ENCODE measurements at regions of chr17 and their contacts with region 1.

Region 1: DNA sequence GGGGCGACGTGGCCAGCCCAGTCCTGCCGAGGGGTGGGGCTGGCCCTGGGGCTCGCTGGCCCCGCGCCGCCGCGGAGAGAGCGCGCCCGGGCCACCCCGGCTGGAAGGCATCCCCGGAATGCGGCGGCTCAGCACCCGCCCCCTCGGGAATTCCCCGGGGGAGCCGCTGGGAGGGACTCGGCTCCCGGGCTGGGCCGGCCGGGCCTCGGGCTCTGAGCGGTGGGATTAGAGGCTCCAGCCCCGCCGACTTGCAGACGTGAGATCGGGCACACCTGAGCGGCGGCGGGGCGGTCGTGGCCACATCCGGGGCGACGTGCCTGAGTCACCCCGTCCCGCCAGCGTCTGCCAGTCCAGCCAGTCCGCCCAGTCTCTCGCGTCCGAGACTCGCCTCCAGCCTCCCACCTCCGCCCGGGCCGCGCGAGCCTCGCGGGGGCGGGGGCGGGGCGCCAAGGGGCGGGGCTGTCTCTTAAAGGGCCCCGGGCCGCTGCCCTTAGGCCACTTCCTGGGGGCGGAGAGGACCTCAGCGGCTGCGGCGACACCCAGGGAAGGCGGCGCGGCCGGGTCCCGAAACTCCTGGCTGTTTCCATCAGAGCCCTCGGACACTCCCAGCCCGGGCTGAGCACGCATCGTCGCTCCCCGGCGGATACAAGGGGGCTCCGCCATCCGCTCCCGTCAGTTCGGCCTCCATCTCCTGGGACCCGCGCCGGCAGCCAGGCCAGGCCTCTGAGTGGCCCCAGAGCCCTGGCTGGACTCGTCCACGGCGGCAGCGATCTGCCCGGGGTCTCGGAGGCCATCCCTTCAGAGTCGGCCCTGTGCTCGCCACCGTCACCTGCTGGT is at the start of gene KCTD11:
- DNase-seq: peak; percentile 92 to 99
- H3K4me3 ChIP-seq: peak within 1 kb of the TSS; percentile 86
- H3K27ac ChIP-seq: peak within 1 kb of the TSS; percentile 98
- H3K4me1 ChIP-seq: peaks cover 28% of the 10 kb centered on the region
- H3K27me3 ChIP-seq: no peaks in the 10 kb centered on the region
- CTCF ChIP-seq: no peak; the same call in 1 of the 2 replicates
- total RNA-seq, gene KCTD11: 16.4 and 18.3 TPM in 2 replicates

Region 2: DNA sequence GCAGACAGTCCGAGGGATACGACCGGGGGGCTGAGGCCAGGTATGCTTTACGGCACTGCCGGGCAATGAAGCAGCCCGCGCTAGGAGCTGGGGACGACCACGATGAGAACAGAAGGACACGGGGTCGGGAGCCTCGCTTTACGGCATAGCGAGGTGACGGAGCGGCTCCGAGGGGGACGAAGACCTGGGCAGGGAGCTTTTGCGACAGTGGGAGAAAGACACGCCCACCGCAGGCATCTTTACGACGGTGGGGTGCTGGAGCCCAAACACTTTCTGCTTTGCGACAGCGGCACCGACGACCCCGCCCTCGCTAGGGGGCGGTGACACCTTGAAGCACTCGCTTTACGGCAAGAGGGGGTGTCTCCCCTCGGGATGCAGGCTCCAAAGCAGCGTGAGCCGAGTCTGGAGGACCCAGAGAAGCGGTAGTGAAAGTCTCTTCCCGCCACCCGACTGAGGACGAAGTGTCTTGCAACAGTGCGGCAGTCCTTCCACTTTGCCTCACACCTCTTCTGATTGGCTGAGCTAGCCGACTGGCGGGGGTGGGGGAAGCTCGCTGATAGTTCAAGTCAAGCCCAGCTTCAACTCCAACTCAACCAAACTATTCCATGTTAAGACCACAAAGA is 22.4 kb before region 1 on chr17:
- CTCF ChIA-PET with region 1: interaction called, 3 read pairs
- POLR2A ChIA-PET with region 1: interaction called, 16 read pairs
- intact Hi-C with region 1: no loop called
- DNase-seq: peak; percentile 94 to 98
- H3K4me3 ChIP-seq: peak overlapping the region; percentile 100
- H3K27ac ChIP-seq: peak overlapping the region; percentile 67
- H3K4me1 ChIP-seq: peaks cover 16% of the 10 kb centered on the region
- H3K27me3 ChIP-seq: no peaks in the 10 kb centered on the region
- CTCF ChIP-seq: no peak

Region 3: GRCh38 chr17:7370853-7371252 is 19.0 kb after region 1 on chr17:
- CTCF ChIA-PET with region 1: no interaction called
- POLR2A ChIA-PET with region 1: interaction called, 11 read pairs
- intact Hi-C with region 1: no loop called
- DNase-seq: no peak
- H3K4me3 ChIP-seq: no peak overlapping the region
- H3K27ac ChIP-seq: no peak overlapping the region
- H3K4me1 ChIP-seq: no peaks in the 10 kb centered on the region
- H3K27me3 ChIP-seq: no peaks in the 10 kb centered on the region
- CTCF ChIP-seq: no peak

Region 4: GRCh38 chr17:7383742-7384488 is 32.0 kb after region 1 on chr17:
- CTCF ChIA-PET with region 1: interaction called, 9 read pairs
- POLR2A ChIA-PET with region 1: interaction called, 4 read pairs
- intact Hi-C with region 1: loop called (anchors 2 kb)
- DNase-seq: no peak
- H3K4me3 ChIP-seq: no peak overlapping the region
- H3K27ac ChIP-seq: no peak overlapping the region
- H3K4me1 ChIP-seq: no peaks in the 10 kb centered on the region
- H3K27me3 ChIP-seq: no peaks in the 10 kb centered on the region
- CTCF ChIP-seq: no peak

Region 5: DNA sequence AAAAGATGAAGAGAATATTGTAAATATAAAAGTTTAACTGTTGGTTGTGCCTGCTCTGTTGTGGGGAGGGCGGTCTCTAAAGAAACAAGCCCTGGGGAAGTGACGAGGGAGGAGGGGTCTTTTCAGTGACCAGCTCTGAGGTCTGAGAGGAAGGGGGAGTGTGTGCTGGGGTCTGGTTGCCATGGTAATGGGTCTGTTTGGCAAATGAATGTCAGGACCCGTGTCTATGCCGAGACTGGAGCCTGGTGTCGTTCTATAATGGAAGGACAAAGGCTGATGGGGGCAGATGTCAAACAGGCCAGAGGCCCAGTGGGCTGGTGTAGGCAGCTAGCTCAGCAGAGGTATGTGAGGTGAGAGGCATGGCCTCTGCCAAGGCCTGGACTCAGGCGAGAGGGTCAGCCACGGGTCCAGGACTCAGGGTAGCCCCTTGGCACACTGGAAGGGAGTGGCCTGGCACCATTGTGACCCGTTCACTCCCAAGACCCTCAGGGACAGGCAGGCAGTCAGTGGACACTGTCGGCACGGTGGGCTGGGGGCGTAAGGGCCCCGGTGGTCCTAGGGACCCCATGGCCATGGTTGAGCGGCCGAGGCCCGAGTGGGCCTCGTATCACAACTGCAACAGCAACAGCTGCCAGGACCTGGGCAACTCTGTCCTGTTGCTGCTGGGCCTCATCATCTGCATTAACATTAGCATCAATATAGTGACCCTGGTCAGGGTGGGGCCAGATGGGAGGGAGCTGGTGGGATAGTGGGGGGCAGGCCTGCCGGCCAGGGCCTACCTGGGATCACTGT is 68.1 kb after region 1 on chr17 and contains the start of gene SPEM1:
- CTCF ChIA-PET with region 1: no interaction called
- POLR2A ChIA-PET with region 1: no interaction called
- intact Hi-C with region 1: no loop called
- DNase-seq: no peak
- H3K4me3 ChIP-seq: no peak within 1 kb of the TSS
- H3K27ac ChIP-seq: no peak within 1 kb of the TSS
- H3K4me1 ChIP-seq: no peaks in the 10 kb centered on the region
- H3K27me3 ChIP-seq: no peaks in the 10 kb centered on the region
- CTCF ChIP-seq: no peak
- total RNA-seq, gene SPEM1: 0.83 and 1.1 TPM in 2 replicates

Region 6: DNA sequence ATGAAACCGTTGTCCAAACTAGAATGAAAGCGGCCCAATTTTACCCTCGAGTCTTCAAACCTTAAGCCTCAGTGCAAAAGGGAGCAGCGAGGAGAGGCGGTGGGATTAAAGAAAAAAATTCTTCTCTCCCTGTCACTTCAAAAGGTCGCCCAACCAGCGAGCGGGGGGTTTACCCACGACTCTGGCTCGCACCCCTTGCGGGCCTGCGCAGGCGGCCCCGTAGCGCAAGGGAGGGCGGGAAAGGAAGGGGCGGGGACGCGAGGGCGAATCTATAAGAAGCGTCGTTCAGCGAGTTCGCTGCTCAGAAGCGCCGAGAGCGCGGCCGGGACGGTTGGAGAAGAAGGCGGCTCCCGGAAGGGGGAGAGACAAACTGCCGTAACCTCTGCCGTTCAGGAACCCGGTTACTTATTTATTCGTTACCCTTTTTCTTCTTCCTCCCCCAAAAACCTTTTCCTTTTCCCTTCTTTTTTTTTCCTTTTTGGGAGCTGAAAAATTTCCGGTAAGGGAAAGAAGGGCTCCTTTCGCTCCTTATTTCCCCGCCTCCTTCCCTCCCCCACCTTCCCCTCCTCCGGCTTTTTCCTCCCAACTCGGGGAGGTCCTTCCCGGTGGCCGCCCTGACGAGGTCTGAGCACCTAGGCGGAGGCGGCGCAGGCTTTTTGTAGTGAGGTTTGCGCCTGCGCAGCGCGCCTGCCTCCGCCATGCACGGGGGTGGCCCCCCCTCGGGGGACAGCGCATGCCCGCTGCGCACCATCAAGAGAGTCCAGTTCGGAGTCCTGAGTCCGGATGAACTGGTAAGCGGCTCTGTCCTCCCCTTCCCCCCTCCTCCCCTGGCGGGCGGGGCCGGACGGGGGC is 132.4 kb after region 1 on chr17 and contains the start of gene POLR2A:
- CTCF ChIA-PET with region 1: interaction called, 13 read pairs
- POLR2A ChIA-PET with region 1: interaction called, 3 read pairs
- intact Hi-C with region 1: loop called (anchors 1 kb)
- DNase-seq: peak; percentile 79 to 99
- H3K4me3 ChIP-seq: peak within 1 kb of the TSS; percentile 88
- H3K27ac ChIP-seq: peak within 1 kb of the TSS; percentile 95
- H3K4me1 ChIP-seq: peaks cover 18% of the 10 kb centered on the region
- H3K27me3 ChIP-seq: no peaks in the 10 kb centered on the region
- CTCF ChIP-seq: no peak
- total RNA-seq, gene POLR2A: 149 and 166 TPM in 2 replicates

Region 7: DNA sequence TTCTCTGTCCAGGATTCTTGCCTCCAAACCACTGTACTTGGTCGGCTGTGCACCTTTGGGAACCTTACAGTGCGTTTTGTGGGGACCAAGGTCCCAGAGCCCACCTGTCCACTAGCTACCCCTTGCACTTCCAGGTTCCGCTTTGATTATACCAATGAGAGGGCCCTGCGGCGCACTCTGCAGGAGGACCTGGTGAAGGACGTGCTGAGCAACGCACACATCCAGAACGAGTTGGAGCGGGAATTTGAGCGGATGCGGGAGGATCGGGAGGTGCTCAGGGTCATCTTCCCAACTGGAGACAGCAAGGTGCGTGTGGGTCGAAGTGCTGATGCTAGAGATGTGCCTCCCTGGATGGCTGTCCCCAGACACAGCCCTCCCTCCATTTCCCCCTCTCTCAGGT is 151.1 kb after region 1 on chr17:
- CTCF ChIA-PET with region 1: interaction called, 3 read pairs
- POLR2A ChIA-PET with region 1: no interaction called
- intact Hi-C with region 1: loop called (anchors 5 kb)
- DNase-seq: no peak
- H3K4me3 ChIP-seq: no peak overlapping the region
- H3K27ac ChIP-seq: no peak overlapping the region
- H3K4me1 ChIP-seq: no peaks in the 10 kb centered on the region
- H3K27me3 ChIP-seq: no peaks in the 10 kb centered on the region
- CTCF ChIP-seq: peak; percentile 31; the same call in 1 of the 2 replicates

Region 8: GRCh38 chr17:7561028-7561575 is 209.2 kb after region 1 on chr17:
- CTCF ChIA-PET with region 1: interaction called, 6 read pairs
- POLR2A ChIA-PET with region 1: interaction called, 3 read pairs
- intact Hi-C with region 1: loop called (anchors 1 kb)
- DNase-seq: peak; percentile 62 to 93
- H3K4me3 ChIP-seq: peak overlapping the region; percentile 92
- H3K27ac ChIP-seq: peak overlapping the region; percentile 60
- H3K4me1 ChIP-seq: peaks cover 9% of the 10 kb centered on the region
- H3K27me3 ChIP-seq: no peaks in the 10 kb centered on the region
- CTCF ChIP-seq: peak; percentile 69

Measured in PC-9 (cell line).